Endothelial cell of umbilical vein (primary cell): ENCODE measurements at regions of chr6 and their contacts with region 1.

Region 1: DNA sequence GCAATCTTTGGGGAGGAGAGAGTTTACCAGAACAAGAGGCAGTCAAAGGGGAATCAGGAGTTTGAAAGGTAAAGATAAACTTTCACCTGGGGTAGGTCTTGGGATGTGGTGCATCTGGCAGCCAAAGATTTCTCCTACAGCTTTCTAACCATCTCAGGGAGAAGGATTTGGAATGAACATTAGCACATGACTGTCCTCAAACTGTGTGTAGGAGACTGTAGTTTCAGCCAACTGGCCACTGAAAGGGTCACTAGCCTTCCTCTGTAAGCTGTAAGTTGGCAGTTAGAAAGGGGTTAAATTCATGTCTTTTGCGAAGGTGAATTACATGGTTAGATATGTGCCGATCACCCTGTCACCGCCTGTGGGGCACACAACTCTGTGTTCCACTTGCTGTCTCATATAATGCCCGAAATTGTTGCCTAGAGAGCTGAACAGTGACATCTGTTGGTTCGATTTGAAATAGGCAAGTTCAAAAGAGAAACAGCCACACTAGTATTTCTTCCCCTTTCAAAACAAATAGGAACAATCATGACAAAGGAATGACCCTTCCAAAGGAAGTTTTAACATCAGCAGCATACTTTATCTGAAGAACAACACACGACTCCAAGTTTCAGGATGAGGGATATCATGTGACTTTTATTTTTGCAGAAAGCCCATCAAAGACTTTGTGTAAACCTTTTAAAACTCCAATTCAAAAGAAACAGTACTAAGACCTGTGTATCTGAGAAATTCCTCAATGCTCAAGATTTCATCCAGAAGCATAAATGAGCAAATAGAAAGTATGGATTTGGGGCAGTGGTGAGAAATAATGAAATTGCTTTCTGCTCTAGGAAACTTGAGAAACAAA is 1.1 kb upstream of the OPN5 start:
- DNase-seq: peak; percentile 86
- H3K4me3 ChIP-seq: no peak overlapping the region
- H3K27ac ChIP-seq: no peak overlapping the region
- H3K4me1 ChIP-seq: peaks cover 3% of the 10 kb centered on the region
- H3K27me3 ChIP-seq: peaks cover 0 to 4% of the 10 kb centered on the region in 2 experiments
- CTCF ChIP-seq: peak; percentile 50 to 68
- POLR2A ChIP-seq: no peak

Region 2: DNA sequence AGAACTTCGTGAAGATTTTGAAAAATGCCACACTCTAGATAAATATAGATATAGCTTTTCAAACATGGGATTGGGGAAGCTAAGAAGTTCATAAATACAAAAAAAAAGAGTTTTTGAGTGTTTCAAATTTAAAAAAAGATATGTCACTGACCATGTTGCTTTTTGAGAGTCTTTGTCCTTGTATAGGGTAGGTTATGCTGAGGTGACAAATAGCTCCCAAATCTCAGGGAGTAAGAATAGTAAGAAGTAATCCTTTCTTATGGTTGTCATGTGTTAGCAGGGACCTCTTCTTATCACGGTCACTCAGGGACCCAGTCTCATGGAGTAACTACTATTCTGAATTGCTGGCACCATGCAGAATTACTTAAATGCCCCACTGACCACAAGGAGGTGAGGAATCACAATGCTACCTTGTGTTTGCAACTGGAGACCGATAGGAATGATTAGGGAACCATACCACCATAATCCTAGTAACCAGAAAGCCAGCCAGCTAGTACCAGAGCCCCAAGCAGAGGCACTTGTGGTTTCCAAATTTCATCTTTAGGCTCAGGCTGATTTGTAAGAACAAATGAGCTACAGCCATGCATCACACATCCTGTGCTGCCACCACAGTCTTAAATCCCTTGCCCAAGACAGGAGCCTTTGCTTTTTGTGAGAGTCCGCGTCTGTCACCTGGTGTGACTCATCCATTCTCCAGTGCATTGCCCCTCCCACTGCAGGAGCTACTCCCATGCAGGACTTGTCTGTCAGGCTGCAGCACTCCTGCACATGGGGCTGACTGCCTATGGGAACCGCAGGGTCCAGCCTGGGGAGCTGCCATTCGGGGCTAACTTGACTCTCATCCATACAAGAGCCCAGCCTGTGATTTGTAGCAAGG is 124.8 kb before region 1 on chr6:
- CTCF ChIA-PET with region 1: no interaction called
- POLR2A ChIA-PET with region 1: no interaction called
- dilution Hi-C with region 1: no loop called
- intact Hi-C with region 1: loop called (anchors 5 kb)
- DNase-seq: peak; percentile 31
- H3K4me3 ChIP-seq: no peak overlapping the region
- H3K27ac ChIP-seq: no peak overlapping the region
- H3K4me1 ChIP-seq: peaks cover 5% of the 10 kb centered on the region
- H3K27me3 ChIP-seq: peaks cover 0 to 2% of the 10 kb centered on the region in 2 experiments
- CTCF ChIP-seq: no peak
- POLR2A ChIP-seq: no peak